SK-N-SH (cell line): ENCODE measurements at regions of chr4 and their contacts with region 1.

Region 1: GRCh38 chr4:99117876-99118693 is 26.0 kb downstream of the ADH4 start:
- DNase-seq: peak; percentile 23
- H3K4me3 ChIP-seq: no peak overlapping the region
- H3K27ac ChIP-seq: no peak overlapping the region
- H3K4me1 ChIP-seq: no peaks in the 10 kb centered on the region
- H3K27me3 ChIP-seq: no peaks in the 10 kb centered on the region
- CTCF ChIP-seq: peak; percentile 64
- EP300 ChIP-seq: no peak
- RAD21 ChIP-seq: peak; percentile 70

Region 2: DNA sequence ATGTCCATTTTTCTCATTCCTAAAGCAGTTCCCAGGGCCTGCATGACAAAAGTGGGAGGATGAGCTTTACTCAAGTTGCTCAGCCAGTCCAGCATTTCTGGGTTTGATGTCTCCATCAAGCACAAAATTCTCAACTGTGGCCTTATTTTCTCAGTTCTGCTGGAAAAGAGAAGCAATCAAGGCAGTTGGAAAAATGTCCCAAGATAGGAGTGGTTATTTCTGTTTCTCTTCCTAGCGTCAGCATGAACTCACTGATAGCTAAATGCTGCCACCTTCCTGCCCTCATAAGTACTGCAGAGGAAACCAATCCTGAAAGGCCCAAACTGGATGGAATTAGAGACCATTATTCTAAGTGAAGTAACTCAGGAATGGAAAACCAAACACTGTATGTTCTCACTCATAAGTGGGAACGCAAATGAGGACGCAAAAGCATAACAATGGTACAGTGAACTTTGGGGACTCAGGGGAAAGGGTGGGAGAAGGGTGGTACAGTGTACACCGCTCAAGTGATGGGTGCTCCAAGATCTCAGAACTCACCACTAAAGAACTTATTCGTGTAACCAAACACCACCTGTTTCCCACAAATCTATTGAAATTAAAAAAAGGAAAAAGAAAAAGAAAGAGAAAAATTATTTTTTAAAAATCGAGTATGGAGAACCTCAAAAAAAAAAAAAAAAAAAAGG is 287.5 kb after region 1 on chr4:
- CTCF ChIA-PET with region 1: interaction called, 17 read pairs
- POLR2A ChIA-PET with region 1: no interaction called
- DNase-seq: peak; percentile 24
- H3K4me3 ChIP-seq: peak overlapping the region in 1 of 2 experiments; percentile 38; a peak in 1 of 4 replicates
- H3K27ac ChIP-seq: peak overlapping the region in 1 of 2 experiments; percentile 77; a peak in 2 of 4 replicates
- H3K4me1 ChIP-seq: peaks cover 0 to 13% of the 10 kb centered on the region in 2 experiments; a peak in 2 of 4 replicates
- H3K27me3 ChIP-seq: no peaks in the 10 kb centered on the region
- CTCF ChIP-seq: peak; percentile 97
- EP300 ChIP-seq: no peak
- RAD21 ChIP-seq: peak; percentile 94